Activated CD4-positive, alpha-beta T cell treated with anti-CD3 and anti-CD28 coated beads, Interleukin-2, amount 10 ng/mL, durations not matched to agents 24 days and 14 days (primary cell): ENCODE measurements at regions of chr4 and their contacts with region 1.

Region 1: DNA sequence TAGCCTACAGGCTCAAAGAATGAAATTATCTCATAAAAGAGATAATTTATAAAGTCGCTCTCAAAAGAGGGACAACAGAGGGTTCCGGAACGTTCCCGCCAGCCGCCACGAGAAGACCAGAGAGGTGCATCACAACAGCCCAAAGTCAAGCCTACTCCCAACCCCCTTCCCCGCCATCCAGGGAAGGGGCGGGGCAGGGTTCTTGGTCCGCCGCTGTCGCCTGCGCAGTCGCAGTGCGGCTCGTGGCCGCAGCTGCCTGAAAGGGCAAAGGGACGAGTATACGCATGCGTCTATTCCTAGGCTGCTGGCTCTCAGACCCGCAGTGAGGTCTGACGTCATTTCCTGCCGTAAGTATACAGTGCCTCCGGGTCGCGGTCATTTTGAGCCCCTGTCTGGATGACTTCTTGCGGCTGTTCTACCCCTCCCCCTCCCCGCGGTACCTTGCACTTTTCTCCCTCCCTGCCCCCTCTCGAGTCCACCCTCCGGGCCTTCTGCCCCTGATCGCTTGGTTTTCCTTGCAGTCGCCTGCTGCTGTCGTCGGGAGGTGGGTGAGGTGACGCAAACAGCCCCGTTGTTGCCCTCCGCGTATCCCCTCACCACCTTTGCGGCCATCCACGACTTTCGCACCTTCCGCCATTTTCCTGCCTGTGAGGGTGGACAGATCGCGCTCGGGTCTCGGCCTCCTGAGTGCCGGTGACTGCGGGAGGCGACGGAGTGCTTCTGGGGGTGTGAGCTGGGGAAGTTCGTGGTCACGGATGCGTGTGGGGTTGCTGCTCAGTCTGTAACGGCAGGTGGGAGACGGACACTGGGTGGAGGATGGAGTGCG is at the start of gene OCIAD1:
- DNase-seq: peak; percentile 98
- H3K4me3 Mint-ChIP-seq: peak within 1 kb of the TSS; percentile 97
- H3K27ac Mint-ChIP-seq: peak within 1 kb of the TSS; percentile 100
- H3K4me1 Mint-ChIP-seq: peaks cover 20% of the 10 kb centered on the region
- H3K27me3 Mint-ChIP-seq: peaks cover 2% of the 10 kb centered on the region
- total RNA-seq, gene OCIAD1: 116 and 130 TPM in 2 replicates

Region 2: GRCh38 chr4:47914220-47914925 is 916.5 kb before region 1 on chr4 and contains the start of gene NFXL1:
- intact Hi-C with region 1: loop called (anchors 2 kb)
- DNase-seq: peak; percentile 98
- H3K4me3 Mint-ChIP-seq: peak within 1 kb of the TSS; percentile 84
- H3K27ac Mint-ChIP-seq: peak within 1 kb of the TSS; percentile 91
- H3K4me1 Mint-ChIP-seq: peaks cover 25% of the 10 kb centered on the region
- H3K27me3 Mint-ChIP-seq: peaks cover 7% of the 10 kb centered on the region
- total RNA-seq, gene NFXL1: 11.2 and 15.0 TPM in 2 replicates

Region 3: DNA sequence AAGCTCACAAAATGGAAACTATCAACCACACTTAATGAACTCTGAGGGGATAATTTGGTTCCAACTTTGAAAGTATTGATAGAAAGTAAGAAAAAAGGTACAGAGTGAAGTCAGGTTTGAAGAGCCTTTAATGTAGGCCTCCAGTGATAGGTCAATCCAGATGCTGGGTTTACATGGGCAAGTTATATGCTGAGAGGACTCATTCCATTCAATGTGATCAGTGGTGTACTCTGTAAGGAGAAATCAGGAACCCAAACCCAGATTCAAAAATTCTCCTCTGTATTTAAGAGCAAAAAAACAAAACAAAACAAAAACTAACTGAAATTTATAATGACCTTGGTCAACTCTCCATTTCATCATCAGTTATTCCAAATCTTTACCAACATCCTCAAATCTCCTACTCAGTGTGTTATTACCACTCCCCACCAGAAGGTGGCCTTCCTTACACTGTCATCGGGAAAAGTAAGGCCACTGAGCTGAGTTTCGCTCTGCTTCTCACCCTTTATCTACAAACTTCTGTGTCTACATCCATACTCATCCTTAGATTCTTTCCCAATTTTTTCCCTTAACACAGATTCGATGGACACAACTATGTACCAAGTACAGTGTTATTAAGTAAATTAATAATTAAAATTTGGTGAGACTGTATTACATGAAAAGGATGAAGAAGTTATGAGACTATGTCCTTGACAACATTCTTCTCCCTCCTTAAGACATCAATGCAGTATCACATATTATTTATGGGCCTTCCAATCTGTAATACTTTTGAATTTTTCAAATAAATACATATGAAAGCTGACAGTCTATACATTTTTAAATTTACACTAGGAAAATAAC is 252.6 kb before region 1 on chr4:
- intact Hi-C with region 1: loop called (anchors 5 kb)
- DNase-seq: peak; percentile 85
- H3K4me3 Mint-ChIP-seq: no peak overlapping the region
- H3K27ac Mint-ChIP-seq: no peak overlapping the region
- H3K4me1 Mint-ChIP-seq: peaks cover 4% of the 10 kb centered on the region
- H3K27me3 Mint-ChIP-seq: no peaks in the 10 kb centered on the region

Region 4: DNA sequence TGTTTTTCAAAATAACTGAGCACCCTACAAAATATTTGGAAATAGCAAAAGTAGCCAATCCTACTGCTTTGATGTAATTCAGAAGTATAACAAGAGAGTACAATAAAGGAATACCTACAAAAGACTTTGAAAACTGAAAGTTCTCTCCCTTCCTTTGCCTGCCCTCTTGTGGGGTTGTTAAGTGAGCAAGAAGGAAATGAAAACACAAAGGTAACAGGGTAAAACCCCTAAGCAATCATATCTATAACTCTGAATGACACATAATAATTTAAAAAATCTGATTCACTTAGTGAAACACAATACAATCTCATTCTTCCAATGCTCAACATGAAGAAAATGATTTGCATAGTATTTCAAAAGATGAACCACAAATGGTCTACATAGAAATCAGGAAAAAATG is 149.1 kb before region 1 on chr4:
- intact Hi-C with region 1: loop called (anchors 5 kb)
- DNase-seq: peak; percentile 68
- H3K4me3 Mint-ChIP-seq: no peak overlapping the region
- H3K27ac Mint-ChIP-seq: peak overlapping the region; percentile 42
- H3K4me1 Mint-ChIP-seq: peaks cover 24% of the 10 kb centered on the region
- H3K27me3 Mint-ChIP-seq: no peaks in the 10 kb centered on the region

Region 5: GRCh38 chr4:48704091-48704801 is 126.7 kb before region 1 on chr4:
- intact Hi-C with region 1: loop called (anchors 5 kb)
- DNase-seq: no peak
- H3K4me3 Mint-ChIP-seq: no peak overlapping the region
- H3K27ac Mint-ChIP-seq: no peak overlapping the region
- H3K4me1 Mint-ChIP-seq: peaks cover 14% of the 10 kb centered on the region
- H3K27me3 Mint-ChIP-seq: no peaks in the 10 kb centered on the region

Region 6: GRCh38 chr4:48906206-48907173 is 75.6 kb after region 1 on chr4 and contains the start of gene OCIAD2:
- intact Hi-C with region 1: loop called (anchors 1 kb)
- DNase-seq: peak; percentile 93
- H3K4me3 Mint-ChIP-seq: peak within 1 kb of the TSS; percentile 94
- H3K27ac Mint-ChIP-seq: peak within 1 kb of the TSS; percentile 90
- H3K4me1 Mint-ChIP-seq: peaks cover 39% of the 10 kb centered on the region
- H3K27me3 Mint-ChIP-seq: no peaks in the 10 kb centered on the region
- total RNA-seq, gene OCIAD2: 54.1 and 65.3 TPM in 2 replicates